ENCODE measurements at regions of chr12 and their contacts with region 1.

Region 1: DNA sequence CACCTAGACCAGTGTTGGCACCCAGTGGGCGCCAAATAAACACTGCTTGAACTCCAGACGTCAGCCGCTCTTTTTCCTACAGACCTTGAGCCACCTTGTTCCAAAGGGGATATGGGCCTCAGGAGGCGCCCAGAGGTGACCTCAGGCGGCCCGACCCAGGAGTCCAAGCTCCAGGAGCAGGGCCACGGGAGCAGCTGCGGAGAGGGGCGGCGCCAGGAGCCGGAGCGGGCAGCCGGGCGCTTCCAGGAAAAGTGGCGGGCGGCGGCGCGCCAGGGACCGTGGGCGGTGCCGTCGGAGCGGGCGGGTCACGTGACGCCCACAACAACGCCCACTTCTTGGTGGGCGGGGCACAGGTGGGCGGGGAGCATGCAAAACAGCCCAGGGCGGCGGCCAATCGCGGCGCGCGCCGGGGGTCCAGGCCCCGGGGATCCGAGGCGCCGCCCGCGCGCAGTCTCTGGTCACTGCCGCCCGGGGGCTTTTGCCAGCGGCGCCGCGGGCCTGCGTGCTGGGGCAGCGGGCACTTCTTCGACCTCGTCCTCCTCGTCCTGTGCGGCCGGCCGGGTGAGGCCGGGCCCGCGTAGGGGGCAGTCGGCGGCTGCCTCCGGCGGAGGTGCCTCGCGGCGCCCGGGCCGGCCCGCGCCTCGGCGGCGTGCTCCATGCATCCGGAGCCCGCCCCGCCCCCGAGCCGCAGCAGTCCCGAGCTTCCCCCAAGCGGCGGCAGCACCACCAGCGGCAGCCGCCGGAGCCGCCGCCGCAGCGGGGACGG is at the start of gene ORAI1:
- DNase-seq: peak; percentile 94
- H3K4me3 ChIP-seq: peak within 1 kb of the TSS; percentile 47 to 67 (median 55)
- H3K27ac ChIP-seq: peak within 1 kb of the TSS; percentile 77
- H3K4me1 ChIP-seq: peaks cover 43% of the 10 kb centered on the region
- H3K27me3 ChIP-seq: no peaks in the 10 kb centered on the region
- CTCF ChIP-seq: no peak
- POLR2A ChIP-seq: peak; percentile 92
- total RNA-seq, gene ORAI1: 29.0 and 30.5 TPM in 2 replicates

Region 2: GRCh38 chr12:121579981-121580868 is 46.0 kb before region 1 on chr12:
- CTCF ChIA-PET with region 1: interaction called, 13 read pairs
- POLR2A ChIA-PET with region 1: interaction called, 3 read pairs
- dilution Hi-C with region 1: no loop called
- intact Hi-C with region 1: loop called (anchors 1 kb)
- DNase-seq: peak; percentile 58
- H3K4me3 ChIP-seq: peak overlapping the region; percentile 59 to 84 (median 76)
- H3K27ac ChIP-seq: peak overlapping the region; percentile 73
- H3K4me1 ChIP-seq: peaks cover 33% of the 10 kb centered on the region
- H3K27me3 ChIP-seq: no peaks in the 10 kb centered on the region
- CTCF ChIP-seq: no peak
- POLR2A ChIP-seq: peak; percentile 17

Region 3: DNA sequence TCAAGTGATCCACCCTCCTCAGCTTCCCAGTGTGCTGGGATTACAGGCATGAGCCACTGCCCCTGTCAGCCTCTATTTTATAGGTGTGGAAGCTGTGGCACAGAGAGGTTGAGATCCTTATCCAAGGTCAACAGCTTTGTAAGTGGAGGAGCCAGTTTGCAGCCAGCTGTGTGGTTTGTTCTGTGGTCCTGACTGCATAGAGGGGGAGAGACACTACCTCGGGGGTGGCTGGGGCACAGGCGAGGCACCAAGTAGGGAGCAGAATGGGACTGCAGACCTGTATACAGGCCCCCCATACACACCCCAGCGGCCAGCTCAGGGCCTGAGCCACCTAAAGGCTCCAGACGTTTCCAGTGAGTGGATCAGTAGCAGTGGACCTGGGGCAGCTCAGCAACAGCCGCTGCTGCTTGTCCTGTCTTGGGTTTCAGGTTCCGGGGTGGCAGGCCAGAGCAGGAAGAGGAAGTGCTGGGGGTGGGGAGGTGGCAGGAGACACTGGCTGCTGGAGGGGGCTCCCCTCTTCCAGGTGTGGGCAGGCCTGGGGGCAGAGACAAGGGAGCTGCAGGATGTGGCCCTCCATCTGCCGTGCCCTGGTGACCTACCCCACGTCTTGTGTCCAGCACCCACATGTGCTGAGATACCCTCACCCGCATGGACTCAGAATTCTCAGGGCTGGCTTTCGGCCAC is 11.1 kb after region 1 on chr12:
- CTCF ChIA-PET with region 1: interaction called, 20 read pairs
- POLR2A ChIA-PET with region 1: no interaction called
- dilution Hi-C with region 1: no loop called
- intact Hi-C with region 1: no loop called
- DNase-seq: no peak
- H3K4me3 ChIP-seq: no peak overlapping the region
- H3K27ac ChIP-seq: no peak overlapping the region
- H3K4me1 ChIP-seq: peaks cover 2% of the 10 kb centered on the region
- H3K27me3 ChIP-seq: no peaks in the 10 kb centered on the region
- CTCF ChIP-seq: no peak
- POLR2A ChIP-seq: no peak

Region 4: DNA sequence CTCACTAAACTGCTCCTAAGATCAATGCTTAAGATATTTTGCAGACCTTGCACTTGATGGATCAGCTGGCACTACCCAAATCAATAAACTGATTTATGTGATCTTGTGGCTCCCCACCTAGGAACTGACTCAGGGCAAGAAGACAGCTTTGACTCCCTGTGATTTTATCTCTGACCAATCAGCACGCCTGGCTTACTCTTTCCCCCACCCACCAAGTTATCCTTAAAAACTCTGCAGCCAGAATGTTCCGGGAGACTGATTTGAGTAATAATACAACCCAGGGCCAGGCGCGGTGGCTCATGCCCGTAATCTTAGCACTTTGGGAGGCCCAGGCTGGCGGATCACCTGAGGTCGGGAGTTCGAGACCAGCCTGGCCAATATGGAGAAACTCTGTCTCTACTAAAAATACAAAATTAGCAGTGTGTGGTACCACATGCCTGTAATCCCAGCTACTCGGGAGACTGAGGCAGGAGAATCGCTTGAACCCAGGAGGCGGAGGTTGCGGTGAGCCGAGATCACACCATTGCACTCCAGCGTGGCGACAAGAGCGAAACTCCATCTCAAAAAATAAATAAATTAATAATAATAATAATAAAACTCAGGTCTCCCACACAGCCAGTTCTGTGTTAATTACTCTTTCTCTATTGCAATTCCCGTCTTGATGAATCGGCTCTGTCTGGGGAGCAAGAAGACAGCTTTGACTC is 31.2 kb after region 1 on chr12:
- CTCF ChIA-PET with region 1: interaction called, 6 read pairs
- POLR2A ChIA-PET with region 1: no interaction called
- dilution Hi-C with region 1: no loop called
- intact Hi-C with region 1: loop called (anchors 1 kb)
- DNase-seq: no peak
- H3K4me3 ChIP-seq: no peak overlapping the region
- H3K27ac ChIP-seq: no peak overlapping the region
- H3K4me1 ChIP-seq: peaks cover 12% of the 10 kb centered on the region
- H3K27me3 ChIP-seq: no peaks in the 10 kb centered on the region
- CTCF ChIP-seq: no peak
- POLR2A ChIP-seq: no peak

Measured in endothelial cell of umbilical vein (primary cell).